ENCODE measurements at regions of chr10 and their contacts with region 1.

Region 1: DNA sequence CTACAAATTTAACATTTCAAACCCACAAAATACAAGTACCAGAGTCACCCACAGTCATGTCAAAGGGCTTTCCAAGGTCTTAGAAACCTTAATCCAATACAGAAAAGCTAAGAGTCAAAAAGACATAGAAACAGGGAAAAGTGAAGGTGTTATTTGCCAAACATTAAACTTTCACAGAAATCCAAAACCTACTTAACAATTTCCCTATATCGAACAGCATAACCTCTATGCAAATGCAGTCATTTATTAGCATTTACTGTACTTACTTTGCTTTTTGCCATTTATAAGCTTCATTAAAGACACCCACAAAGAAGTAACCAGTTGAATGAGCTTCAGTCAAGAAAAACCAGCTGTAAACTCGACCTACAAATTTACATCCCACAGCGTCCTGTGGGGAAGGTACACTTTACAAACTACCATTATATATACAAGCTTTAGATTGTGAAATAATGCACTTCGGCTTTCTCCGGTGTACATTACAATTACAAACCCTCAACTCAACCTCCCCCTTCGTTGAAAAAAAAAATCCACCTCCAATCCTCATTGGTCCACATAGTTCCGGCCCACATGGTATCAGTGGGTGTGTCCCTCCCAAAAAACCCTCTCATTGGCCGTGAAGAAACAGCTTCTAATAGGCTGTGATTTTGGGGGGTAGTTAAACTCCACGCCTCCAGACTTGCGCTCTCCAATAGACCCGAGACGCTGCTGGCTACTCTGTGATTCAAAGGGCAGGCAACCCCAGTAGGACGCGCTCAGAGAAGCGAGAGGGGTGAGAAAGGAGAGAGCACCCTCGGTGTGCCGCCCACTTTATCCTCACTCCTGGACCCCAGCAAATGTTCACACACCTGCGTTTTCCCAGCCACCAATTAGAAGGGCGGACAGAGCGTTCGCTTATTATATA is 1.4 kb downstream of the PANK1 start:
- DNase-seq: peak; percentile 99
- ATAC-seq: peak; percentile 87
- H3K4me3 ChIP-seq: peak overlapping the region; percentile 80 to 94 (median 91)
- H3K27ac ChIP-seq: peak overlapping the region; percentile 99
- H3K4me1 ChIP-seq: peaks cover 61% of the 10 kb centered on the region
- H3K27me3 ChIP-seq: no peaks in the 10 kb centered on the region
- CTCF ChIP-seq: no peak
- EP300 ChIP-seq: peak in 1 of 2 experiments; percentile 51; a peak in 3 of 4 replicates
- POLR2A ChIP-seq: peak; percentile 98 to 99
- RAD21 ChIP-seq: no peak

Region 2: DNA sequence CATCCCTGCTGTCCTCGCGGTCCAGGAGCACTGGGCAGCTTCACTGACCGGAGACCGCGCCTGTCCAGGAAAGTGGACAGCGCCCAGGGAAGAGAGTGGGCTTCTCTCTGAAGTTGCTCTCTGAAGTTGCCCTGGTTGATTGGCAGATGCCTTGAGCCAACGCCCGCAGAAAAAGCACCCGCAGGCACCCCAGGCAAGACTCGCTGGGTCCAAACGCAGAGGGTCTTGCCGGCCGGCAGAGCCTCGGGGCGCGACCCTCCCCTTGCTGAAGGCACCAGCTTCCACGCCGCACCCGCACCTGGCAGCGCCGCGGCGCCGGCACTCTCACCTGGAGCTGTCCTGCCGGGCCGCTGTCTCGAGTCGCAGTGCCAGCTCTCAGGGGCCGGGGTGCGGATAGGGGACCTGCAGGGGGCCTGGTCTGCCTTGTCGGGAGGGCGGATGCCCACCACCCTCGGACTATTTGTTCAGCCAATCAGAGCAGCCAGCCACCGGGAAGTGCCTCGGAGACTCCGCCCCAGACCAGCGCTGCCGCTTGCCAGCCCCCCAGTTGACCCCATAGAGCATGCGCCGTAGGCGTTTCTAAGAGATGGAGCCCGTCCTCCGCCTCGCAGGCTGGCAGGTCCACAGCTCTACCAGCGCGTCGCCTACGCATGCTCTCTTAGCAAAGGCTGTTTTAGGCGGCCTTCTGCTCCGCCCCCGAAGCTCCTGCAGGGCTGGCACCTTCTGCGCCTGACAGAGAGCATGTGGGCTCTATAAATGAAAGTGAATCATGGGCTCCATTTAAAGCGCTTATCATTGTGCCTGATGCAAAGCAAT is 392.1 kb before region 1 on chr10 and contains the start of gene LIPA:
- CTCF ChIA-PET with region 1: no interaction called
- POLR2A ChIA-PET with region 1: interaction called, 18 read pairs
- in situ Hi-C with region 1: no loop called
- intact Hi-C with region 1: no loop called
- DNase-seq: peak; percentile 94
- ATAC-seq: peak; percentile 96
- H3K4me3 ChIP-seq: peak within 1 kb of the TSS; percentile 81 to 97 (median 89)
- H3K27ac ChIP-seq: peak within 1 kb of the TSS; percentile 71
- H3K4me1 ChIP-seq: peaks cover 18% of the 10 kb centered on the region
- H3K27me3 ChIP-seq: no peaks in the 10 kb centered on the region; a peak in 1 of 5 replicates
- CTCF ChIP-seq: peak; percentile 31
- EP300 ChIP-seq: no peak
- POLR2A ChIP-seq: peak; percentile 80 to 89
- RAD21 ChIP-seq: peak; percentile 45; the same call in 1 of the 2 replicates
- total RNA-seq, gene LIPA: 50.6 and 79.5 TPM in 2 replicates

Region 3: GRCh38 chr10:89426230-89426868 is 217.3 kb before region 1 on chr10:
- CTCF ChIA-PET with region 1: no interaction called
- POLR2A ChIA-PET with region 1: no interaction called
- in situ Hi-C with region 1: no loop called
- intact Hi-C with region 1: loop called (anchors 5 kb)
- DNase-seq: peak; percentile 41
- ATAC-seq: peak; percentile 88
- H3K4me3 ChIP-seq: no peak overlapping the region
- H3K27ac ChIP-seq: no peak overlapping the region
- H3K4me1 ChIP-seq: peaks cover 20% of the 10 kb centered on the region
- H3K27me3 ChIP-seq: no peaks in the 10 kb centered on the region
- CTCF ChIP-seq: peak; percentile 84
- EP300 ChIP-seq: no peak
- POLR2A ChIP-seq: no peak
- RAD21 ChIP-seq: peak; percentile 62

Region 4: GRCh38 chr10:89625041-89625765 is 18.5 kb before region 1 on chr10:
- CTCF ChIA-PET with region 1: no interaction called
- POLR2A ChIA-PET with region 1: interaction called, 114 read pairs
- in situ Hi-C with region 1: no loop called
- intact Hi-C with region 1: no loop called
- DNase-seq: no peak
- ATAC-seq: peak; percentile 25; the same call in 1 of the 3 replicates
- H3K4me3 ChIP-seq: no peak overlapping the region
- H3K27ac ChIP-seq: no peak overlapping the region
- H3K4me1 ChIP-seq: peaks cover 15% of the 10 kb centered on the region; the same call in 1 of the 2 replicates
- H3K27me3 ChIP-seq: no peaks in the 10 kb centered on the region
- CTCF ChIP-seq: no peak
- EP300 ChIP-seq: no peak
- POLR2A ChIP-seq: no peak
- RAD21 ChIP-seq: no peak

Region 5: DNA sequence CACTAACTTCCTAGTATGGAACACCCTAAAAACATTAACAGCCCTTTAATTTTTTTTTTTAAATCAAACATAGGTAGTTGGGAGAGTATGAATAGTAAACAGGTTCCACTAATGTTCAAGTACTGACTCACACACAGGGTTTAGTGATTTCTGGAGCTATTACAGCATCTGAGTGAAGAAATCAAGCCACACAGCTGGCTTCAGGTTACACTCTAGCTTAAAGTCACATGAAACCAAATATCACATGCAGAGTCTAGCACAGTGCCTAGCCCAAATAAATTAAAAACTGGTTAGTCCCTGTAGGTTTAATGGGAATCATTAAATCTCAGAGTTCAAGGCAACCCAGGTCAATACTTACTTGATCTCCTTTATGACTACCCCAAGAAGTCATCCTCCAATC is 10.2 kb before region 1 on chr10:
- CTCF ChIA-PET with region 1: no interaction called
- POLR2A ChIA-PET with region 1: interaction called, 114 read pairs
- in situ Hi-C with region 1: no loop called
- intact Hi-C with region 1: no loop called
- DNase-seq: peak; percentile 45
- ATAC-seq: peak; percentile 70
- H3K4me3 ChIP-seq: peak overlapping the region in 1 of 3 experiments; percentile 31; a peak in 1 of 6 replicates
- H3K27ac ChIP-seq: peak overlapping the region; percentile 64
- H3K4me1 ChIP-seq: peaks cover 61% of the 10 kb centered on the region
- H3K27me3 ChIP-seq: no peaks in the 10 kb centered on the region
- CTCF ChIP-seq: no peak
- EP300 ChIP-seq: no peak
- POLR2A ChIP-seq: no peak
- RAD21 ChIP-seq: no peak

Region 6: GRCh38 chr10:89668386-89669071 is 24.8 kb after region 1 on chr10:
- CTCF ChIA-PET with region 1: no interaction called
- POLR2A ChIA-PET with region 1: interaction called, 16 read pairs
- in situ Hi-C with region 1: no loop called
- intact Hi-C with region 1: no loop called
- DNase-seq: peak; percentile 48
- ATAC-seq: peak; percentile 68
- H3K4me3 ChIP-seq: no peak overlapping the region
- H3K27ac ChIP-seq: no peak overlapping the region
- H3K4me1 ChIP-seq: peaks cover 40% of the 10 kb centered on the region
- H3K27me3 ChIP-seq: no peaks in the 10 kb centered on the region
- CTCF ChIP-seq: no peak
- EP300 ChIP-seq: no peak
- POLR2A ChIP-seq: no peak
- RAD21 ChIP-seq: no peak

Region 7: DNA sequence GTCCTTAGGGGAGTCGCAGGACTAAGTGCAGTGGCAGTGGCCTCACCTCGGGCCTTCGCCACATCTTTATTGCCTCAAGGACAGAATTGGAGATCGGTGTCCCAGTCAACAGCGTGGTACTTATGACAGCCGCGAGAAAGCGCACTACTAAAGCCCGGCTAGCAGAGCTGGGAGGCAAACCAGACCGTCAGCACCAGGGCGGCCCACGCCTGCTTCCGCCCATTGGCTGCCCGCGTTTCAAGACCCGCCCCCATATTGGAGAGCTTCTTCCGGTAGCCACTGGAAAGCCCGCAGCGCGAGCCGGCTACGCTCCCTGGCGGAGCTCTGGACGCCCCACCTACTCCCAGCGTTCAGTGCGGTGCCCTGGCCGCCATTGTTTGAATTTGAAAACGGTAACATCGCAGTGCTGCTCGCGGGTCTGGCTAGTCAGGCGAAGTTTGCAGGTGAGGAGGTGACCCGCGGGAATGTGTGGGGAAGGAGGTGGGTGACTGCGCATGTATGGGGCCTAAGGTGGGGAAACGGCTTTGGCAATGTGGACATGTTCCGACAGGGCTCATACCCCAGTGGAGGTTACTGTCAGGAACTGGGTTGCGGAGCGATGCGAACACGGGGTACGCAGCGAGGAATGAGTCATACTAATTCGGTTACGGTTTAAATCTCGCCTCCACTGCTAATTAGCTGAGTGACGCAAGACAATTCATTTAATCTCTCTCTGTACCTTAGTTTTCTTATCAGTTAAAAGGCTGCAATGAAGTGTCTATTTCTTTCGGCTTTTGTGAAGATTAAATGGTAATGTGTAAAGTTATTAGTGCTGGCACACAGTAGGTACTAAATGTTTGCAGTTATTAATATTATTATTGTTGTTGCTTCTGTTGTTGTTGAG is 57.8 kb after region 1 on chr10 and contains the start of gene KIF20B:
- CTCF ChIA-PET with region 1: no interaction called
- POLR2A ChIA-PET with region 1: interaction called, 79 read pairs
- in situ Hi-C with region 1: loop called (anchors 5 kb)
- intact Hi-C with region 1: loop called (anchors 1 kb)
- DNase-seq: peak; percentile 94
- ATAC-seq: peak; percentile 96
- H3K4me3 ChIP-seq: peak within 1 kb of the TSS; percentile 82 to 94 (median 93)
- H3K27ac ChIP-seq: peak within 1 kb of the TSS; percentile 91
- H3K4me1 ChIP-seq: peaks cover 74% of the 10 kb centered on the region
- H3K27me3 ChIP-seq: peaks cover 0 to 7% of the 10 kb centered on the region in 2 experiments; a peak in 1 of 5 replicates
- CTCF ChIP-seq: peak; percentile 81
- EP300 ChIP-seq: no peak
- POLR2A ChIP-seq: peak; percentile 94 to 95
- RAD21 ChIP-seq: peak; percentile 76
- total RNA-seq, gene KIF20B: 38.6 and 83.9 TPM in 2 replicates

Region 8: GRCh38 chr10:90420637-90421318 is 777.1 kb after region 1 on chr10:
- CTCF ChIA-PET with region 1: no interaction called
- POLR2A ChIA-PET with region 1: no interaction called
- in situ Hi-C with region 1: no loop called
- intact Hi-C with region 1: no loop called
- DNase-seq: no peak
- ATAC-seq: no peak
- H3K4me3 ChIP-seq: no peak overlapping the region
- H3K27ac ChIP-seq: no peak overlapping the region
- H3K4me1 ChIP-seq: peaks cover 6% of the 10 kb centered on the region; the same call in 1 of the 2 replicates
- H3K27me3 ChIP-seq: no peaks in the 10 kb centered on the region
- CTCF ChIP-seq: no peak
- EP300 ChIP-seq: no peak
- POLR2A ChIP-seq: no peak
- RAD21 ChIP-seq: no peak